ENCODE measurements at regions of chr1 and their contacts with region 1.

Region 1: GRCh38 chr1:110384581-110385321 is 6.1 kb downstream of the SLC16A4 start:
- DNase-seq: no peak
- ATAC-seq: no peak
- H3K4me3 ChIP-seq: no peak overlapping the region
- H3K27ac ChIP-seq: no peak overlapping the region
- H3K4me1 ChIP-seq: no peaks in the 10 kb centered on the region
- H3K27me3 ChIP-seq: no peaks in the 10 kb centered on the region
- CTCF ChIP-seq: no peak

Region 2: GRCh38 chr1:110300412-110301085 is 84.2 kb before region 1 on chr1:
- CTCF ChIA-PET with region 1: no interaction called
- POLR2A ChIA-PET with region 1: interaction called, 14 read pairs
- in situ Hi-C with region 1: no loop called
- intact Hi-C with region 1: no loop called
- DNase-seq: no peak
- ATAC-seq: no peak
- H3K4me3 ChIP-seq: no peak overlapping the region
- H3K27ac ChIP-seq: no peak overlapping the region
- H3K4me1 ChIP-seq: no peaks in the 10 kb centered on the region
- H3K27me3 ChIP-seq: peaks cover 2% of the 10 kb centered on the region; the same call in 1 of the 2 replicates
- CTCF ChIP-seq: no peak

Region 3: DNA sequence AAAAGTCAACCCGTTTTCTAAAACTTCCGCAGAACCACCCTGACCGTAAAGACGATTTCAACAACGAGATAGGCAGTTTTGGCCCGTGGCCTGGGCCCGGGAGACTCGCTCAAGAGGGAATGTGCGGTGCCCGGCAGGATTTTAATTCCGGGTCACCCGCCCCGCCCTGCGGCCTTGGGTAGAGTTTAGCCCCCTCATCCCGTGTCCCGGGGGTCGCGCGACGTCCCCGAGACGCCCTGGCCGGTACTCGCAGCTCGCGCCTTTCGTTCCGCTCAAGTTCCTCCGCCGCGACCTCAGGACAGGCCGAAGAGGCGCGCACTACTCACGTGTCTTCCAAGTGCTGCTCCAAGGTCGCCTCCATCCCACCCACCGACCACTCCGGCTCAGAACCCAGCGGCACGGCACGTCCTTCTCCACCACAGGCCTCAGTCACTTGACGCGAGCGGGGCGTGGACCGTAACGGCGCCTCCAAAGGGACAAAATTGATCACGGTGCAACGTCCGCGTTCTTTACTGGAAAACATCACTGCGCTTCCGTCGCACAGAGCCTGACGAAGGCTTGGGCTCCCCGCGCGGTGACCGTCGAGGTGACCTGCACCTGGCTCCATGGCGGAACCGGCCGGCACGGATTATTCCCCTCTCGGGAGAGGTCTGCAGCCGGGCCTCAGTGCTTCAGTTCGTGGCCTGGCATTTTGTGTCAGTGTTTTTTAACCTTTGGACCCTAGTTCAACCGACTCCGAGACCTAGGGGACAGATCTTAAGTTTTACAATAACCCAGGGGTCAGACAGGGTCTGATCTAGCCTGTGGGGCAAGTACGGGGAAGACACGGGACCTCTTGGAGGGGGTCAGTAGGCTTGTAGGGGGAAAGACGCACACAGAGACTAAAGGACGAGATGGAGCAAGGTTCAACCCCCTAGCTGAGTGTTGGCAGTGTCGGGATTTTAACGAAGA is 22.8 kb after region 1 on chr1 and contains the start of gene LAMTOR5:
- CTCF ChIA-PET with region 1: no interaction called
- POLR2A ChIA-PET with region 1: interaction called, 10 read pairs
- in situ Hi-C with region 1: no loop called
- intact Hi-C with region 1: no loop called
- DNase-seq: peak; percentile 75
- ATAC-seq: peak; percentile 96
- H3K4me3 ChIP-seq: peak within 1 kb of the TSS; percentile 90 to 96
- H3K27ac ChIP-seq: peak within 1 kb of the TSS; percentile 94
- H3K4me1 ChIP-seq: no peaks in the 10 kb centered on the region
- H3K27me3 ChIP-seq: no peaks in the 10 kb centered on the region
- CTCF ChIP-seq: no peak
- total RNA-seq, gene LAMTOR5: 119 TPM